ENCODE measurements at regions of chr6 and their contacts with region 1.

Region 1: DNA sequence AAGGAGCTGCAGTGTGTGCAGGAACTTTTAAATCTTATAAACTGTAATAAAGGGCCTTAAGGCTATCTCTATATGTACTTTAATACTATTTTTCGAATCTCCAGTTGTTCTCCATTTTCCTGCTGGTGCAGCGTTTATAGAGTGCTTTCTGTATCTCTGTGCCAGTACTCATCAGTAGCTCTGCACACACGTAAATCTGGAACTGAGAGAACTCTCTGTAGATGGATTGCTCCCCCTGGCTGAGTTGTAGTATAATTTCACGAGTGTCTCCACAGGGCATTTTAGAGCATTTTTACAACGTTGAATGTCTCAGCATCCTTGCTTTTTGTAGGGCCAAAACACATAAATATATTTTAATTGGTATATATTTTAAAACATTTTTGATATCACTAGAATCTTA is 256.5 kb downstream of the TRDN start:
- DNase-seq: peak; percentile 94
- H3K4me3 ChIP-seq: peak overlapping the region; percentile 20
- H3K27ac ChIP-seq: peak overlapping the region; percentile 67
- H3K4me1 ChIP-seq: peaks cover 40% of the 10 kb centered on the region
- H3K27me3 ChIP-seq: no peaks in the 10 kb centered on the region
- CTCF ChIP-seq: peak; percentile 76

Region 2: DNA sequence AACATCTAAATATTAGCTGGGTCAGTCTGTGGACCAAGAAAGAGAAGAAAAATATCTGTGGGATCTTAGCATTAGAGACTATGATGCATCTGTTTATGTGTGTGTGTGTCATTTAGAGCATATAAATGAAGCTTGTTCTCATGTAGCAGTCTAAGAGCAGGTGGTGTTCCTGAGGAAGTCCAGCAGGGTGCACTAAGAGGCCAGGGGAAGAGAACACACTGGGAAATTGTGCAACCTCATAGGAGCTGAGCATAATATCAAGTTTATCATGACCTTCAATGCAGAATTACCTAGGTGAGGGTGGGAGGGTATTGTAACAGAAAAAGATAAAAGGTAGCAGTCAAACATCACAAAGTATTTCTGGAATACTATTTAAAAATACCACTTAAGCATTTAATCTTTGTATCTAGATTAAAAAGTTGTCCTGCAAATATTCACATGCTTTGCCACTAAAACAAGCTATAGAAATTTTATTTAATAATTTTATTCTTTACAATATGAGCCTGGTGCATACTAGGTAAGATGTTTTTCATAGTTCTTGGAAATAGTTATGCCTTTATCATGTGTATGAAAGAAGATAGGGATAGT is 510.7 kb before region 1 on chr6:
- CTCF ChIA-PET with region 1: interaction called, 28 read pairs
- POLR2A ChIA-PET with region 1: no interaction called
- intact Hi-C with region 1: loop called (anchors 1 kb)
- DNase-seq: peak; percentile 91
- H3K4me3 ChIP-seq: no peak overlapping the region
- H3K27ac ChIP-seq: peak overlapping the region; percentile 59
- H3K4me1 ChIP-seq: peaks cover 54% of the 10 kb centered on the region
- H3K27me3 ChIP-seq: no peaks in the 10 kb centered on the region
- CTCF ChIP-seq: peak; percentile 87

Region 3: GRCh38 chr6:123074616-123075015 is 305.6 kb before region 1 on chr6:
- CTCF ChIA-PET with region 1: no interaction called
- POLR2A ChIA-PET with region 1: no interaction called
- intact Hi-C with region 1: loop called (anchors 10 kb)
- DNase-seq: no peak
- H3K4me3 ChIP-seq: no peak overlapping the region
- H3K27ac ChIP-seq: no peak overlapping the region
- H3K4me1 ChIP-seq: peaks cover 4% of the 10 kb centered on the region
- H3K27me3 ChIP-seq: no peaks in the 10 kb centered on the region
- CTCF ChIP-seq: no peak